GM18951 (cell line): ENCODE measurements at regions of chr13 and their contacts with region 1.

Region 1: GRCh38 chr13:51814825-51815650 is 11.1 kb upstream of the DHRS12 start:
- POLR2A ChIP-seq: peak; percentile 17

Region 2: GRCh38 chr13:51330791-51331190 is 484.2 kb before region 1 on chr13:
- in situ Hi-C with region 1: no loop called
- POLR2A ChIP-seq: no peak

Region 3: DNA sequence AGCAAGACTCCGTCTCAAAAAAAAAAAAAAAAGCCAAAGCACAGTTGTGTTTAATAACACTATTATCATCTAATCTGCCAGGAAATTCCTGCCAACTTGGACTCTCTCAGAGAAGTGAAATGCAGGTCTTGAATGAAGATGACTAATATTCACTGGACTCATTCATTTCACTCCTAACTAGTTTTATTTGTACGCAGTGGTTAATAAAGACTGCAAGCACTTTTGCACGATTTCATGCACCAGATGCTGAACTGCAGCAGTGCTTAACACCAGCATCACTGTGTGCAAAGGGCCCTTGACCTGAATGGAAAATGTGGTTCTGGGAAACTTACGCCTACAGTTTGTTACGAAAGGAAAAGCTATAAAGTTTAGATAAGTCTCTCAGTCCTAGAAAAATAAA is 74.3 kb before region 1 on chr13:
- in situ Hi-C with region 1: no loop called
- POLR2A ChIP-seq: no peak

Region 4: DNA sequence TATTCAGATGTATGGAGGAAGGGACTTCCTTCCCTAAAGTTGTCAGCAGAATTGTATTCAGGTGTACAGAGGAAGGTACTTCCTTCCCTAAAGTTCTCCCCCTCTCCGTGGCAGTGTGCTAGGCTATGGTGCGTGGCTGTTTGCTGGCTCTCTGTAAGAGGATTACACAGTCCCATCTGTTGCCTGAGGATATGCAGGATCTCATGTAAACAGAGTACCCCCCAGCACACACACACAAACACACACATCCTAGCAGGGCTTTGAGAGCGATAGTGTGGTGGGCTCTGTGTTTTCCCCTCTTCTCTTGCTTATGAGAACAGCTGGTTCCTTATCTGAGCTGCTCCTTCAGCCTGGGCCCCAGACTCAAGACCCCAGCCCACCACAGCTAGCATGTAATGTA is 303.6 kb after region 1 on chr13:
- in situ Hi-C with region 1: no loop called
- POLR2A ChIP-seq: no peak

Region 5: DNA sequence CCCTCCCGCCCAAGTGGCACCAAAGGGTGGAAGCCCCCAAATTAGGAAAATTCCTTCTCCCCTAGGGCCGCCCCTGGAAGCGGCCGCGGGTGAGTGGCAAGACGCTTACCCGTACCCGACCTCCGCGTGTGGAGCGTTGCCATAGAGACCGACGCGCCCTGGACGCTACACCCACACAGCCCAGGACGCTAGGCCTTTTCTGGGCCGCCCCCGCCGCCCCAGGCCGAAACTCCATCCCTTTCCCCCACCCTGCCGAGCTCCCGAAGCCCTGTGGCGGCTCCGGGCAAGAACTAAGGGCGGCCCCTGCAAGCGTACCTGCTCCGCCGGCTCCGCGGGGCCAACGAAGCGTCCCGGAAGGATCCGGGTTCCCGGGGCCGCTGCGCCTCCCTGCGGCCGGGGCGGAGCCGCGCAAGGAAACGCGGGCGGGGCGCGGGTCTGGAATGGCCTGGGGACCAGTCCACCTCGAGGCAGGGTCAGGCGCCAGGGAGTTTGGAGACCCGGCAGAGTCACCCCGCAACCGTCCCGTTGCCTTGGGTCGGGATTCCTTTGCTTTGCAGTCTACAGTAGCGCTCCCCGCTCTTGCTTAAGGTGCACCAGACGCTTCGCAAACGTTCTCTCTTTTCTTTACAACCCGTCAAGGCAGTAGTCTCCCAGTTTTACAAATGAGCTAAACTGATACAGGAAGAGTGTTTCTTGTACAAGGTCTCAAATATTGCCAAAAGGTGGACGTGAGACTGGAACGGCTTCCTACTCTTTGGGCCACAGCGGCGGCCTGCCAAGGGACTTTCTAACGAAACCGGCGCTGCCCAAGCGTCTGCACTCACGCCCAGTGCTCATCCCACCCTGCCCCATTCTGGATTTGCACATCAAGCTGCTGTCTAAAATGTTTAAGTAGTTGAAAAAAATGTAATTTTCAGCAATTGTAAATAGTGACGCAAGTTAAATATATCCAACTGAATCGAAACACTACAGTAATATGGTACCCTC is 314.0 kb after region 1 on chr13 and contains the start of gene NEK5:
- in situ Hi-C with region 1: loop called (anchors 5 kb)
- POLR2A ChIP-seq: no peak